Activated CD8-positive, alpha-beta memory T cell treated with anti-CD3 and anti-CD28 coated beads, Interleukin-2, amount 10 ng/mL, durations not matched to agents 7 days and 5 days (primary cell): ENCODE measurements at regions of chr9 and their contacts with region 1.

Region 1: GRCh38 chr9:18255158-18255629 is 218.8 kb upstream of the ADAMTSL1 start:
- DNase-seq: peak; percentile 74
- ATAC-seq: peak; percentile 73
- H3K4me3 Mint-ChIP-seq: no peak overlapping the region
- H3K27ac Mint-ChIP-seq: no peak overlapping the region
- H3K4me1 Mint-ChIP-seq: no peaks in the 10 kb centered on the region
- H3K27me3 Mint-ChIP-seq: peaks cover 14% of the 10 kb centered on the region

Region 2: DNA sequence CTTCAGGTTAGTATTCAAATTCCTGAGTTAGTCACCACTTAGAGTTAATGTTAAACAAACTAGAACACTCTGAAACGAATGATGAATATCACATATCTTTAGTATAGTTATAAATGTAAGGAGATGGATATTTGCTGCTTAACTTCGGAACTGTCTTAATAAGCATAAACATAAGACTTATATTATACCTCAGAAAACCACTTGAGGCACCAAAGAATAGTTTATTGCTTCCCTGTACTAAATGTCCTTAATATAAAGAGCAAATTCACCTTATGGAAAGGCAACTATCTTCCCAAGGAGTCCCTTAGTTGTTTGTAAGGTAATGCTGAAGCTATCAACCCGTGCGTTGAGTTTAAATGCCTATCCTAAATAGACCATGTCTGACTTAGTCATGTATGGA is 81.3 kb before region 1 on chr9:
- CTCF ChIA-PET with region 1: no interaction called
- DNase-seq: no peak
- ATAC-seq: no peak
- H3K4me3 Mint-ChIP-seq: no peak overlapping the region
- H3K27ac Mint-ChIP-seq: no peak overlapping the region
- H3K4me1 Mint-ChIP-seq: no peaks in the 10 kb centered on the region
- H3K27me3 Mint-ChIP-seq: no peaks in the 10 kb centered on the region

Region 3: DNA sequence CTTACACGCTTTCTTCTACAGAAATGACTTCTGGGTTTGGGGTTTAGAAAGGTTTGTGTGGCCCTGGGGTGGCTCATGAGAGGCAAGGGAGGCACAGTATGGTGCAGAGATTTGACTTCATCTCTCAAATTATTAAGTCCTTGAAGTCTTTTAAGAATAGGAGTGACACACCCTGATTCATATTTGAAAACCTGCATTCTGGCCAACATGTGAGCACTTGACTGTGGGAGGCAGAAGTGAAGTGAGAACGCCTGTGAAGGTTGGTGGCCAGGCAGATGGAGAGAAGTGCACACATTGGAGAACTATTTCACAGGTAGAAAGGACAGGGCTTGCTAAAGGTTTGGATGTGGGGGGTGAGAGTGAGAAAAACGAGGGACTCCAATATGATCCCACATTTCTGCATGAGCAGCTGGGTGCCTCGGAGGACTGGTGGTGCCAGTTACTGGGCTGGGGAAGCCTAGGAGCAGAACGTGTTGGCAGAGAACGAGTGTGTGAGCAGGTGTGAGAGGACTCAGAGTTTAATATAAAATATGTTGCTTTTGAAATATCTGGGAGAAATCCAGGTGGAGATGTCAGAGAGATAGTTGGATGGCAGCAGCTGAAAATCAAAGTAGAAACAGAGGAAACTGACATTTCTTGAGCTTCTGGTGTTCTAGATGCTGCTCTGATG is 21.3 kb before region 1 on chr9:
- CTCF ChIA-PET with region 1: no interaction called
- DNase-seq: no peak
- ATAC-seq: no peak
- H3K4me3 Mint-ChIP-seq: no peak overlapping the region
- H3K27ac Mint-ChIP-seq: no peak overlapping the region
- H3K4me1 Mint-ChIP-seq: no peaks in the 10 kb centered on the region
- H3K27me3 Mint-ChIP-seq: no peaks in the 10 kb centered on the region

Region 4: GRCh38 chr9:18268381-18268780 is 13.2 kb after region 1 on chr9:
- CTCF ChIA-PET with region 1: interaction called, 14 read pairs
- DNase-seq: no peak
- ATAC-seq: no peak
- H3K4me3 Mint-ChIP-seq: no peak overlapping the region
- H3K27ac Mint-ChIP-seq: no peak overlapping the region
- H3K4me1 Mint-ChIP-seq: no peaks in the 10 kb centered on the region
- H3K27me3 Mint-ChIP-seq: no peaks in the 10 kb centered on the region

Region 5: GRCh38 chr9:18442629-18443491 is 187.7 kb after region 1 on chr9:
- CTCF ChIA-PET with region 1: interaction called, 24 read pairs
- DNase-seq: peak; percentile 60
- ATAC-seq: peak; percentile 74
- H3K4me3 Mint-ChIP-seq: no peak overlapping the region
- H3K27ac Mint-ChIP-seq: no peak overlapping the region
- H3K4me1 Mint-ChIP-seq: no peaks in the 10 kb centered on the region
- H3K27me3 Mint-ChIP-seq: peaks cover 15% of the 10 kb centered on the region

Region 6: DNA sequence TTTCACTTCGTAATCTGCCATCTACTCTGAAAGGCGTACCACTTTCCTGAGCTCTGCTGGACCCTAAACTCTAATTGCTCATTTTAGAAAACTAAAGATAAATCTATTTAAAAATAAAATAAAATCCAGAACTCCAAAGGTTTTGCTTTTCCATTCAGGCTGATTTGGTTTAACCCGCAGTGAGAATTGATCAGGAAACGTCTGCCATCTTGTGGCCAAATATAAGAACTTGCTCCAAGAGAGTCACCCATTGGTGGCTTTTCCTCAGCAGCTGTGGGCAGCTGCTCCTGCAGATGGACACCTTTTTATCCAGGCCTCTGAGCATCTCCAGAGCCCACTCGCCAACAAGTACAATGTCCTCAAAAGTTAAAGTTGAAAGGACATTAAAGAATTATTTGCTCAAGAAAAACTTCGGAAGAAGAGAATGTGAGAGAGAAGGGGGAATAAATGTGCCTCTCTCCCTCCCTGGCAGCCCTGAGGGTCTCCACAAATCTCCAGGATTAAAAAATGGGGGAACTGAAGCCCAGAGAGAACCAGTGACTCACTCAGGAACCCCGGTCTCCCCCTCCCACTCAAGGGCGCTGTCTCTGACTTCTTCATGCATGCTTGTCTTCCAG is 773.7 kb after region 1 on chr9:
- CTCF ChIA-PET with region 1: interaction called, 27 read pairs
- DNase-seq: no peak
- ATAC-seq: no peak
- H3K4me3 Mint-ChIP-seq: no peak overlapping the region
- H3K27ac Mint-ChIP-seq: no peak overlapping the region
- H3K4me1 Mint-ChIP-seq: peaks cover 14% of the 10 kb centered on the region
- H3K27me3 Mint-ChIP-seq: peaks cover 20% of the 10 kb centered on the region